ENCODE measurements at regions of chr9 and their contacts with region 1.

Region 1: GRCh38 chr9:84315278-84315877 is 25.2 kb downstream of the SLC28A3 start:
- DNase-seq: peak; percentile 32 to 63 (median 40)
- ATAC-seq: peak; percentile 72
- H3K4me3 ChIP-seq: no peak overlapping the region
- H3K27ac ChIP-seq: no peak overlapping the region
- H3K4me1 ChIP-seq: no peaks in the 10 kb centered on the region
- H3K27me3 ChIP-seq: no peaks in the 10 kb centered on the region
- CTCF ChIP-seq: peak; percentile 45 to 66 (median 65); a peak in 5 of 6 replicates
- EP300 ChIP-seq: no peak
- POLR2A ChIP-seq: no peak
- RAD21 ChIP-seq: peak; percentile 45 to 58

Region 2: GRCh38 chr9:83937911-83938323 is 377.5 kb before region 1 on chr9:
- CTCF ChIA-PET with region 1: interaction called, 10 read pairs
- POLR2A ChIA-PET with region 1: no interaction called
- in situ Hi-C with region 1: no loop called
- intact Hi-C with region 1: no loop called
- DNase-seq: peak; percentile 41 to 63 (median 52)
- ATAC-seq: peak; percentile 84
- H3K4me3 ChIP-seq: no peak overlapping the region
- H3K27ac ChIP-seq: no peak overlapping the region
- H3K4me1 ChIP-seq: no peaks in the 10 kb centered on the region
- H3K27me3 ChIP-seq: no peaks in the 10 kb centered on the region
- CTCF ChIP-seq: peak; percentile 43 to 67 (median 57); a peak in 5 of 6 replicates
- EP300 ChIP-seq: no peak
- POLR2A ChIP-seq: no peak
- RAD21 ChIP-seq: peak; percentile 61 to 67

Measured in K562 (cell line).